Aorta (tissue), 5 donors: ENCODE measurements at regions of chr16 and their contacts with region 1.

Region 1: DNA sequence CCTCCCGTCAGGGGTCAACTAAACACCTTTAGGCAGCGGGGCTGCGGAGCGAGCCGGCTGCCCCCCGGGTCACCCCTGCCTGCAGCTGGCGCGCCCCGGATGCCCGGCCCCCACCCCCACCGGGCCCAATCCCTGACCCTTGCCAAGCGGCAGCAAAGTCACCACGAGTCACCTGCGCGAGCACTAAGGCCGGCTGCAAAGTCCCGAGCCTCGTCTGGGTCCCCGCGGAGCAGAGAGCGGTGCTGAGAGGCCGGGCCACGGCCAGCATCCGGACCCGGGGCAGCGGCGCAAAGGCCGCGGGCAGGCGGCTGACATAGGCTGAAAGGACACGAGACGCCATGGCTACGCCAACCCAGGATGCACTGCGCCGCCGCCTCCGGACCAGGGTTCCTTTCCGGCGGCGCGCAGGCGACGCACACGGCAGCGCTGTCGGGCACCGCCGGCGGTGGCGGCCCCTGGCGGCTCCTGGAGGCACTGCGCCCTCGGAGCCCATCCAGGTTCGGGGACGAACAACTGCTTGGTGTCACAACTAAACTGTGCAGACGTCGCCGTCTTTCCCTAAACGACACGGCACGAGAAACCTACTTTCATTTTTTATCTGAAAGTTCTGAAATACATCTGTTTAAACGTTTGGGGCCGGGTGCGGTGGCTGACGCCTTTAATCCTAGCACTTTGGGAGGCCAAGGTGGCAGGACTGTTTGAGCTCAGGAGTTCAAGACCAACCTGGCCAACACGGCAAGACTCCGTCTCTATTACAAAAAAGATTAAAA is at the start of gene NDUFAB1:
- DNase-seq: peak; percentile 94 to 97
- ATAC-seq: peak; percentile 99
- H3K4me3 ChIP-seq: peak within 1 kb of the TSS; percentile 82 to 95
- H3K27ac ChIP-seq: peak within 1 kb of the TSS in 1 of 2 donors; percentile 56
- H3K4me1 ChIP-seq: peaks cover 0 to 2% of the 10 kb centered on the region in 2 donors
- H3K27me3 ChIP-seq: no peaks in the 10 kb centered on the region
- total RNA-seq, gene NDUFAB1: 46.1 to 48.7 TPM

Region 2: DNA sequence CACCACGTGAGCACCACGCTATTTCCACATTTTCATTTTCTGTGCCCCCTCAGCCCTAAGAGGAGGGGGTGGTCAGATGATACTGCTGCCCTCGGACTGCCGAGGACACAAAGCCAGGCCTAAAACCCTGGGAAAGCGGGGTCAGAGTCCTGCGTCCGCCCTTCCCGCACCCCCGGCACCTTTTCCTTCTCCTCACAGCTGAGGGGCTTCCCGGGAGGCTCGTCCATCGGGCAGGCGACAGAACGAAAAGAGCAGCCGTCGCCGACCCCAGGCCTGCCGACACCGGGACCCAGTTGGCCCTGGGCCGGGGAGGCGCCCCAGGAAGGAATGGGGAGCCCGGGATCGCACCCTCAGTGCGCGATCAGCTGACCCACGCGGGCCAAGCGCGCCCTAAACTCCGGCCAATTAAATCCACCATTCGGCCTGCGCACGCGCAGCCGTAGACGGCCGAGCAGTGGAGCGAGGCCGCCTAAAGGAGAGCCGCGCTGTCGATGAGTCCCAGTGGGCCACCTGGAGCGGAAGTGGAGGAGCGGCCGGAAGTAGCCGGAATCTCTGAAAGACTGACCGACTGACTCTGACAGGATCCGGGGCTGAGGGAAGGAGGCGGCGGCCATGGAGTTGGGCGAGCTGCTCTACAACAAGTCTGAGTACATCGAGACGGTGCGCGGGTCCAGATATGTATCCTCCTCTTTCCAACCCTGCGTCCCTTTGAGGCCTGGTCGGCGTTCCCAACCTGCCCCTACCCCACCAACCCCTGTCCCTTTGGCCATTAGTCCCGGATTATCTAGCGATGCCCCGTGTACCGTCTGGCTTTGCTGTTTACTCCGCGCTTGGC is 45.0 kb after region 1 on chr16 and contains the starts of genes DCTN5 and PALB2:
- intact Hi-C with region 1: loop called (anchors 2 to 5 kb)
- DNase-seq: peak; percentile 96 to 97
- ATAC-seq: peak; percentile 100
- H3K4me3 ChIP-seq: peak within 1 kb of the TSS; percentile 68 to 96
- H3K27ac ChIP-seq: peak within 1 kb of the TSS in 1 of 2 donors; percentile 81
- H3K4me1 ChIP-seq: peaks cover 0 to 2% of the 10 kb centered on the region in 2 donors
- H3K27me3 ChIP-seq: no peaks in the 10 kb centered on the region
- total RNA-seq, gene DCTN5: 40.1 to 44.7 TPM
- total RNA-seq, gene PALB2: 7.7 to 9.5 TPM